Astrocyte of the cerebellum (primary cell): ENCODE measurements at regions of chr17 and their contacts with region 1.

Region 1: GRCh38 chr17:4492721-4493561 is 5.7 kb upstream of the SPNS2 start:
- DNase-seq: no peak
- H3K4me3 ChIP-seq: no peak overlapping the region
- CTCF ChIP-seq: no peak

Region 2: GRCh38 chr17:4449736-4450135 is 43.2 kb before region 1 on chr17:
- in situ Hi-C with region 1: loop called (anchors 5 kb)
- DNase-seq: no peak
- H3K4me3 ChIP-seq: no peak overlapping the region
- CTCF ChIP-seq: no peak